MCF 10A (cell line): ENCODE measurements at regions of chr12 and their contacts with region 1.

Region 1: GRCh38 chr12:46372544-46373110 is at the start of gene SLC38A2:
- DNase-seq: peak; percentile 92
- H3K4me3 Mint-ChIP-seq: peak within 1 kb of the TSS; percentile 93
- H3K27ac Mint-ChIP-seq: peak within 1 kb of the TSS; percentile 98
- H3K4me1 Mint-ChIP-seq: peaks cover 12% of the 10 kb centered on the region
- H3K27me3 Mint-ChIP-seq: no peaks in the 10 kb centered on the region
- CTCF ChIP-seq: no peak
- total RNA-seq, gene SLC38A2: 817 and 1,070 TPM in 2 replicates

Region 2: GRCh38 chr12:45065125-45065626 is 1307.5 kb before region 1 on chr12:
- CTCF ChIA-PET with region 1: no interaction called
- POLR2A ChIA-PET with region 1: no interaction called
- intact Hi-C with region 1: no loop called
- DNase-seq: no peak
- H3K4me3 Mint-ChIP-seq: no peak overlapping the region
- H3K27ac Mint-ChIP-seq: no peak overlapping the region
- H3K4me1 Mint-ChIP-seq: no peaks in the 10 kb centered on the region
- H3K27me3 Mint-ChIP-seq: peaks cover 40% of the 10 kb centered on the region
- CTCF ChIP-seq: no peak

Region 3: DNA sequence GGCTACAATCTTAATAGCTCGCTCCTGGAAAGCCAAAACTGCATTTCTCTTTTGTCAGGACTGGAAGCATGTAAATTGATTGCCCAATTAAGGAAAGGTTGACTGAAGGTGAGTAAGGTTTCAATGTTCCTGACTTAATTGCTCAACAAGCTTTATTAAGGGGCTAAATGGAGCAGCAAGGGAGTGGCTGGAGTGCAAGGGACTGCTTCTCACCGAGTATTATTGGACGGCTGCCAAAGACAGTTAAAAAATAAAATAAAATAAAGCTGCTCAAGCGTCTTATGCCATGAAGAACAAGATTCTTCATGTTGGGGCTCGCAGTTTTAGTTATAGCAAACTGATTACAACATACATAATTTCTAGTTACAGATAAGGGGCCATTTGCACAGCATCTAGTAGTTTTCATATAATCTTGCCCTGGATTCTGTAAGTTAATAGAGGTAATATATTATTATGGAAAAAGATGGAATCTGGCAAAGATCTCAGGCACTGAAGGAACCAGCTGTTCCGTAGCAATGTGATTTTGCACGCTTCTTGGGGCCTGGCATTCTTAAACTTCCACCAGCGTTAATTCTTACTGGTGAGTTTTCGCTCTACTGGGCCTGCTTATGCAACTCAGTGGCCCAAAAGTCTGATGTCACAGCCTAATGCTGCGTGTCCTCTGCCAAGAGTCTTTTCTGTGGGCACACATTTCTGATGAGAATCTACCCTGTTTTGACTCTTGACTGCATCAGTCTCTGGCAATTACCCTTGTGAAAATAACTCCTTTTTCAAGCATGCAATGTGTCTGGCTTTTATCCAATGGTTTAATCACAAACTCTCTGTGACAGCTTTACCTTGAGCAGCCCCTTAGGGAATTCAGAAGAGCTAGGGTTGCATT is 212.3 kb before region 1 on chr12:
- CTCF ChIA-PET with region 1: no interaction called
- POLR2A ChIA-PET with region 1: interaction called, 16 read pairs
- intact Hi-C with region 1: no loop called
- DNase-seq: peak; percentile 93
- H3K4me3 Mint-ChIP-seq: peak overlapping the region; percentile 51
- H3K27ac Mint-ChIP-seq: peak overlapping the region; percentile 77
- H3K4me1 Mint-ChIP-seq: peaks cover 18% of the 10 kb centered on the region
- H3K27me3 Mint-ChIP-seq: no peaks in the 10 kb centered on the region
- CTCF ChIP-seq: no peak

Region 4: GRCh38 chr12:46391630-46392029 is 19.0 kb after region 1 on chr12:
- CTCF ChIA-PET with region 1: interaction called, 3 read pairs
- POLR2A ChIA-PET with region 1: interaction called, 302 read pairs
- intact Hi-C with region 1: no loop called
- DNase-seq: no peak
- H3K4me3 Mint-ChIP-seq: no peak overlapping the region
- H3K27ac Mint-ChIP-seq: no peak overlapping the region
- H3K4me1 Mint-ChIP-seq: peaks cover 45% of the 10 kb centered on the region
- H3K27me3 Mint-ChIP-seq: no peaks in the 10 kb centered on the region
- CTCF ChIP-seq: no peak

Region 5: GRCh38 chr12:46414591-46415268 is 42.1 kb after region 1 on chr12:
- CTCF ChIA-PET with region 1: no interaction called
- POLR2A ChIA-PET with region 1: no interaction called
- intact Hi-C with region 1: no loop called
- DNase-seq: no peak
- H3K4me3 Mint-ChIP-seq: no peak overlapping the region
- H3K27ac Mint-ChIP-seq: no peak overlapping the region
- H3K4me1 Mint-ChIP-seq: peaks cover 18% of the 10 kb centered on the region
- H3K27me3 Mint-ChIP-seq: no peaks in the 10 kb centered on the region
- CTCF ChIP-seq: no peak

Region 6: GRCh38 chr12:46473634-46474329 is 101.2 kb after region 1 on chr12:
- CTCF ChIA-PET with region 1: no interaction called
- POLR2A ChIA-PET with region 1: interaction called, 15 read pairs
- intact Hi-C with region 1: loop called (anchors 1 kb)
- DNase-seq: peak; percentile 89
- H3K4me3 Mint-ChIP-seq: peak overlapping the region; percentile 58
- H3K27ac Mint-ChIP-seq: peak overlapping the region; percentile 94
- H3K4me1 Mint-ChIP-seq: peaks cover 44% of the 10 kb centered on the region
- H3K27me3 Mint-ChIP-seq: no peaks in the 10 kb centered on the region
- CTCF ChIP-seq: no peak

Region 7: GRCh38 chr12:46556105-46556559 is 183.5 kb after region 1 on chr12:
- CTCF ChIA-PET with region 1: interaction called, 4 read pairs
- POLR2A ChIA-PET with region 1: interaction called, 82 read pairs
- intact Hi-C with region 1: no loop called
- DNase-seq: peak; percentile 85
- H3K4me3 Mint-ChIP-seq: peak overlapping the region; percentile 17
- H3K27ac Mint-ChIP-seq: peak overlapping the region; percentile 68
- H3K4me1 Mint-ChIP-seq: peaks cover 73% of the 10 kb centered on the region
- H3K27me3 Mint-ChIP-seq: no peaks in the 10 kb centered on the region
- CTCF ChIP-seq: no peak

Region 8: DNA sequence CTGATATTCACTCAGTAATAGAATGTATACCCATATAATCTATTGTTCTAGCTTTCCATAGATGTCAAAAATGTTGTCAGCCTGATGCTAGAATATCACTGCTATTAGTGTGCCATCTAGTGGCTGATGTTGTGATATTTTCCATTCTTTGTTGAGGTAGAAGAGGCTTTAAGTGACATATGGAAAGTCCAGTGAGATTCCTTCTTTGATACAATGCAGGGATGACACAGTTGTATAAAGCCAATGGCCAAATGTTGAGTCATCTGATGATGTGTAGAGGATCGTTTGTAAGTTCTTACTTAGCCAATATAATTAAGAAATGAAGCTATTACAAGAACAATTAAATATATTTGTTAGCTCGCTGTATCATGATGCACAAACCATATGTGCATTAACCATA is 648.7 kb after region 1 on chr12:
- CTCF ChIA-PET with region 1: no interaction called
- POLR2A ChIA-PET with region 1: interaction called, 3 read pairs
- intact Hi-C with region 1: loop called (anchors 5 kb)
- DNase-seq: peak; percentile 86
- H3K4me3 Mint-ChIP-seq: no peak overlapping the region
- H3K27ac Mint-ChIP-seq: no peak overlapping the region
- H3K4me1 Mint-ChIP-seq: peaks cover 34% of the 10 kb centered on the region
- H3K27me3 Mint-ChIP-seq: no peaks in the 10 kb centered on the region
- CTCF ChIP-seq: peak; percentile 57